SK-N-SH (cell line): ENCODE measurements at regions of chr1 and their contacts with region 1.

Region 1: DNA sequence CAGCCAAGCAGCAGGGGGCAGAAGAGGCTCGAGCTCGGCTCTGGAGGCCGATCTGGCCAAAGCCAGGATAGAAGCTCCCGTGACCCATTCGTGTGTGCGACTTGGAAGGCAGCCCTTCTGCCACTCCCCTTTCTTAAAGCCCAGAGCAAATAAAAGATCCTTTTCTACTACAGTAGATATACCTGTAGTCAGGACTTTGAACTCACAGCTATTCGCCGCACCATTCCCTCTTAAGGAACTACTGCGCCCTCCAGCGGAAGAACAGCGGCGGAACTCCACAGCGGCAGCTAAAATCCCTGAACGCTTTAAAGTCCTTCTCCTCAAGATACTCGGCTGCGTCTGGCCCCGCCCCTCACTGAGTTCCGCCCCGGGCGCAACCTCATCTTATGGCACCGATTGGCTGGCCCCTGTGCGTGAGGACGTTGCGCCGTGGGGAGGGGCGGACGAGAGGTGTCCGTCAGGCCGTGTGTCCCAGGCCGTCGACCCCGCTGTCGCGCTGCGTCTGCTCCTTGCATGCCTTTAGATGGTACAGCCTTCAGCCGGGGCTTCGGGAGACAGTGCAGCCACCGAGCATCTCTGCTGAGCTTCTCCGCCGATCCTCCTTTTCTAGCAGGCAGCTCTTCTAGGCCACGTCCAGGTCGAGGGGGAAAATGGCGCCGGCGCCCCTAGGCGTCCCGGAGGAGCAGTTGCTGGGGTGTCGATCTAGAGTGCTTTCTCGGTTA is at the start of gene LRIG2:
- DNase-seq: peak; percentile 94
- H3K4me3 ChIP-seq: peak within 1 kb of the TSS; percentile 90 to 96
- H3K27ac ChIP-seq: peak within 1 kb of the TSS; percentile 87 to 97
- H3K4me1 ChIP-seq: peaks cover 6 to 7% of the 10 kb centered on the region in 2 experiments; a peak in 3 of 4 replicates
- H3K27me3 ChIP-seq: no peaks in the 10 kb centered on the region
- CTCF ChIP-seq: peak; percentile 99
- EP300 ChIP-seq: no peak; a peak in 1 of 4 replicates
- RAD21 ChIP-seq: peak; percentile 50
- polyA plus RNA-seq, gene LRIG2: 3.8 and 4.9 TPM in 2 replicates

Region 2: GRCh38 chr1:112803906-112804762 is 268.8 kb before region 1 on chr1:
- CTCF ChIA-PET with region 1: interaction called, 12 read pairs
- POLR2A ChIA-PET with region 1: no interaction called
- DNase-seq: peak; percentile 79
- H3K4me3 ChIP-seq: no peak overlapping the region; a peak in 1 of 4 replicates
- H3K27ac ChIP-seq: no peak overlapping the region
- H3K4me1 ChIP-seq: no peaks in the 10 kb centered on the region
- H3K27me3 ChIP-seq: no peaks in the 10 kb centered on the region
- CTCF ChIP-seq: peak; percentile 86
- EP300 ChIP-seq: no peak
- RAD21 ChIP-seq: peak; percentile 99

Region 3: GRCh38 chr1:112929979-112930378 is 142.9 kb before region 1 on chr1:
- CTCF ChIA-PET with region 1: interaction called, 11 read pairs
- POLR2A ChIA-PET with region 1: no interaction called
- DNase-seq: no peak
- H3K4me3 ChIP-seq: no peak overlapping the region
- H3K27ac ChIP-seq: no peak overlapping the region
- H3K4me1 ChIP-seq: peaks cover 0 to 12% of the 10 kb centered on the region in 2 experiments; a peak in 2 of 4 replicates
- H3K27me3 ChIP-seq: no peaks in the 10 kb centered on the region
- CTCF ChIP-seq: no peak
- EP300 ChIP-seq: no peak
- RAD21 ChIP-seq: no peak

Region 4: GRCh38 chr1:113048064-113048463 is 24.9 kb before region 1 on chr1:
- CTCF ChIA-PET with region 1: interaction called, 31 read pairs
- POLR2A ChIA-PET with region 1: no interaction called
- DNase-seq: no peak
- H3K4me3 ChIP-seq: no peak overlapping the region
- H3K27ac ChIP-seq: no peak overlapping the region
- H3K4me1 ChIP-seq: no peaks in the 10 kb centered on the region
- H3K27me3 ChIP-seq: no peaks in the 10 kb centered on the region
- CTCF ChIP-seq: no peak
- EP300 ChIP-seq: no peak
- RAD21 ChIP-seq: no peak

Region 5: DNA sequence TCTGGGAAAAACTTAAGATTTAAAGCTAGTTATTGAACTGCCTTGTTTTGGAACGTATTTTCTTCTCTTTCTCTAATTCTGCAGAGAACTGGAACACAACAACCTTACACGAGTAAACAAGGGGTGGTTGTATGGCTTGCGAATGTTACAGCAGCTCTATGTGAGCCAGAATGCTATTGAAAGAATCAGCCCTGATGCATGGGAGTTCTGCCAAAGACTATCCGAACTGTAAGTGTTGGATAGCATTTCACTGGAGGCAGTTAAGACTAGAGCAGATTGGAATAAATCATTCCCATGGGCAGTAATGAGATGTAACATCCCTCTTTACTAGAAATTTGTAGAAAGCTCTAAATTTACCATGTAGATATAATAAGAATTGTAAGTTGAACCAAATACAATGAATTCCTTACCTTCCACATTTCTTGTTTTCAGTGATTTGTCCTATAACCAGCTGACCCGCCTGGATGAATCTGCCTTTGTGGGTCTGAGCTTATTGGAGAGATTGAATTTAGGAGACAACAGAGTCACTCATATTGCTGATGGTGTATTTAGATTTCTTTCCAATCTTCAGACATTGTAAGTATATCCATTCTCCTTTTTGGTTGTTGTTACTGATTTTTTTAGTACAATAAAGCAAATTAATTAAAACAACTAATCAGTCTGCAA is 23.0 kb after region 1 on chr1:
- CTCF ChIA-PET with region 1: interaction called, 13 read pairs
- POLR2A ChIA-PET with region 1: interaction called, 3 read pairs
- DNase-seq: no peak
- H3K4me3 ChIP-seq: no peak overlapping the region
- H3K27ac ChIP-seq: no peak overlapping the region
- H3K4me1 ChIP-seq: no peaks in the 10 kb centered on the region
- H3K27me3 ChIP-seq: no peaks in the 10 kb centered on the region
- CTCF ChIP-seq: no peak
- EP300 ChIP-seq: no peak
- RAD21 ChIP-seq: no peak

Region 6: DNA sequence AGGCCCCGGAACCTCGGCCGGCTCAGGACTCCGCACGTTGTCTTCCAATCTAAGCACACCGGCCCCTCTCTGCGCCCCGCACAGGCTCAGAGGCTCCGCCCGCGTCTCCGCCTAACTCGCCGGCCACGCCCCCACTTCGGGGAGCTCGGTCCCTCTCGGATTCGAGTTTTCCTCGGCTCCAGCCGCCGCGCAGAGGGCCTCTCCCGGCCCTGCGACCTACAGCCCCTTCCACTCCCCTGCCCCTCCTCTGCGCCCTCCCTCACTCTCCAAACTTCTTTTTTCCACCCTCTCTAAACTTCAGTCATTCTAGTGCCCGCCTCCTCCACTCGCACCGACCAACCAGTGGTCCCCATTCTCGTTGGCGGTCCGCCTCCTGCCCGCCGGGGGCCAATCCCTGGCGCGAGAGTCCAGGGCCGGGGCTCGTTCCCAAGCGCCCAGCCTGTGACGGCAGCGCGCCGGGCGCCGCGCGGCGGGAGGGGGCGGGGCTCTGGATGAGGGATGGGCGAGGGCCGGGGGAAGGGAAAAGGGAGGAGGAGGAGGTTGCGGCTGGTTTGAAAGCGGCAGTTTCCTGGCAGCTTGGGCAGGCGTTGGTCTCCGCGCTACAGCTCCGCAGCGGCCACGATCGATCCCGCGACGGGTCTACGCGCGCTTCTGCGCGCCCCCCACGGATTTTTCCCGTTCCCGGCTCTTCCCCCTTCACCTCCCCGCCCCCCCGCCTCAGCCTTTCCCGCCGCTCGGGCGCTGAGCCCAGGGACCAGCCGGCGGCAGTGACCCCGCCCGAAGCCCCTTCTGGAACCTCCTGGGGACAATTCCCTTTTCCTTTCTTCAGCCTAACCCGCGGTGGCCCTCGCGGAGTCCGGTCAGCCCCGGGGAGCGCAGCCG is 317.3 kb after region 1 on chr1 and contains the start of gene MAGI3:
- CTCF ChIA-PET with region 1: interaction called, 11 read pairs
- POLR2A ChIA-PET with region 1: interaction called, 3 read pairs
- DNase-seq: peak; percentile 93
- H3K4me3 ChIP-seq: peak within 1 kb of the TSS; percentile 87 to 98
- H3K27ac ChIP-seq: peak within 1 kb of the TSS; percentile 57 to 100
- H3K4me1 ChIP-seq: peaks cover 0 to 7% of the 10 kb centered on the region in 2 experiments; a peak in 2 of 4 replicates
- H3K27me3 ChIP-seq: no peaks in the 10 kb centered on the region
- CTCF ChIP-seq: no peak
- EP300 ChIP-seq: 0 out of 4 replicates have a peak, but pooled peaks of 1 of the 2 experiments have one; percentile 8
- RAD21 ChIP-seq: peak; percentile 30; the same call in 1 of the 2 replicates
- polyA plus RNA-seq, gene MAGI3: 2.9 and 3.8 TPM in 2 replicates